Activated CD8-positive, alpha-beta T cell treated with anti-CD3 and anti-CD28 coated beads, Interleukin-2, amount 10 ng/mL, durations not matched to agents 7 days and 5 days (primary cell): ENCODE measurements at regions of chr11 and their contacts with region 1.

Region 1: GRCh38 chr11:62591448-62592145 is at the start of gene TUT1:
- DNase-seq: peak; percentile 99
- ATAC-seq: peak; percentile 88
- H3K4me3 Mint-ChIP-seq: peak within 1 kb of the TSS; percentile 91
- H3K27ac Mint-ChIP-seq: peak within 1 kb of the TSS; percentile 93
- H3K4me1 Mint-ChIP-seq: peaks cover 55% of the 10 kb centered on the region
- H3K27me3 Mint-ChIP-seq: no peaks in the 10 kb centered on the region
- total RNA-seq, gene TUT1: 22.2 to 25.0 TPM

Region 2: DNA sequence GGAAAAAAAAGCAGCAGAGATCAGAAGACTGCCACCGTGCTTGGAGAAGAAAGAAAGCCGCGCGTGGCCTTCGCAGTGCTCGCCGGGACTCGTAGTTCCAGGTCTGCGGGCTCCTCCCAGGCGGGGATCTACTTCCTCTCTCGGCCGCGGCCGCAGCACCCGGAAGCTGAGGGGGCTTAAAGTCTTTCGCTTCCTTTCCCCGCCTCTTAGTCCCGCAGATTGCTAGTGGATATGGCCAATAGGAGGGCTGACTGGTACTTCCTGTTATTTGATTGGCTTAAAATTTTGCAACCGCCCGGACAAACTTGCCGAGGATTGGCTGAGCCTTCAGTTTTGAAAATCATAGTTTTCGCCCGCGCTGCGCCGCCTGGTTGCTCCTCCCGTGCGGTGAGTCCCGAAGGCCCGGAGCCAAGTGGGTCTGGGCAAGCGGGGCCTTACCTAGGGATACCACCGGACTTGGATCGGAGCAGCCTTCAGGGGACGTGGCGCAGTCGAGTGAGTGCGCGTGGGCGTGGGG is 467.9 kb before region 1 on chr11 and contains the start of gene INCENP:
- CTCF ChIA-PET with region 1: no interaction called
- POLR2A ChIA-PET with region 1: no interaction called
- DNase-seq: peak; percentile 98
- ATAC-seq: peak; percentile 100
- H3K4me3 Mint-ChIP-seq: peak within 1 kb of the TSS; percentile 87
- H3K27ac Mint-ChIP-seq: peak within 1 kb of the TSS; percentile 93
- H3K4me1 Mint-ChIP-seq: peaks cover 32% of the 10 kb centered on the region
- H3K27me3 Mint-ChIP-seq: peaks cover 3% of the 10 kb centered on the region
- total RNA-seq, gene INCENP: 195 to 211 TPM

Region 3: GRCh38 chr11:62427630-62428233 is 163.9 kb before region 1 on chr11:
- CTCF ChIA-PET with region 1: interaction called, 30 read pairs
- POLR2A ChIA-PET with region 1: interaction called, 12 read pairs
- DNase-seq: peak; percentile 35
- ATAC-seq: peak; percentile 34
- H3K4me3 Mint-ChIP-seq: peak overlapping the region; percentile 2
- H3K27ac Mint-ChIP-seq: peak overlapping the region; percentile 84
- H3K4me1 Mint-ChIP-seq: peaks cover 79% of the 10 kb centered on the region
- H3K27me3 Mint-ChIP-seq: peaks cover 6% of the 10 kb centered on the region

Region 4: DNA sequence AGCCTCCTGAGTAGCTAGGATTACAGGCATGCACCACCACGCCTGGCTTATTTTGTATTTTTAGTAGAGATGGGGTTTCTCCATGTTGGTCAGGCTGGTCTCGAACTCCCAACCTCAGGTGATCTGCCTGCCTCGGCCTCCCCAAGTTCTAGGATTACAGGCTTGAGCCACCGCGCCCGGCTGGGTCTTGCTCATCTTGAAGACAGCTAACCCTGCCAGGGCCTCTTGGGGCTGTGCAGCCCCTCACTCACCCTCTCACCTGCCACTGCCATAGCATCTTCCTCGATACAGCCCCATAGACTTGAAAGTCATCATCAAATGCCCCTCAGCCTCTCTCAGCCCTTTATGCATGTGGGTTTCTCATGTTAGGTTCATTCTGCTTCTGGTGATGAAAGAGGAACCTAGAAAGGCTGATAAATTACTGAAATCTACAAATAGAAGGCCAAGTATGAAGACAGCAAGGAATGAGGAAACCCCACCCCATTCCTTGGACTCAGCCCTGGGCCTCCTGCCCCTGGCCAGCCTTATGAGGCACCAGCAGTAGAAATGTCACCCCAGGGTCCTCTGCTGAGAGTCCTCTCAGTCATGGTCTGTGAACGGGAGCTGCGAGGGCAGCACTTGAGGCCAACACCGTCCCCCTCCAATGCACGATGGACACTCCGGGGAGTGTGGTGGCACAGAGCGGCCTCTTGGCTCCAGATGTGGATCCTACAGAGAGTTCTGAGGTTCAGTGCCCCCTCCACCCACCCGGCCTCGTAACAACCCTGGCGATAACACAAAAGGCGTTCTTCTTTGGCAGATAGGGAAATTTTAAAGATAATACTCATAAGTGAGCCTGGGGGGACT is 148.0 kb before region 1 on chr11:
- CTCF ChIA-PET with region 1: no interaction called
- POLR2A ChIA-PET with region 1: no interaction called
- DNase-seq: no peak
- ATAC-seq: no peak
- H3K4me3 Mint-ChIP-seq: no peak overlapping the region
- H3K27ac Mint-ChIP-seq: no peak overlapping the region
- H3K4me1 Mint-ChIP-seq: peaks cover 3% of the 10 kb centered on the region
- H3K27me3 Mint-ChIP-seq: peaks cover 30% of the 10 kb centered on the region

Region 5: DNA sequence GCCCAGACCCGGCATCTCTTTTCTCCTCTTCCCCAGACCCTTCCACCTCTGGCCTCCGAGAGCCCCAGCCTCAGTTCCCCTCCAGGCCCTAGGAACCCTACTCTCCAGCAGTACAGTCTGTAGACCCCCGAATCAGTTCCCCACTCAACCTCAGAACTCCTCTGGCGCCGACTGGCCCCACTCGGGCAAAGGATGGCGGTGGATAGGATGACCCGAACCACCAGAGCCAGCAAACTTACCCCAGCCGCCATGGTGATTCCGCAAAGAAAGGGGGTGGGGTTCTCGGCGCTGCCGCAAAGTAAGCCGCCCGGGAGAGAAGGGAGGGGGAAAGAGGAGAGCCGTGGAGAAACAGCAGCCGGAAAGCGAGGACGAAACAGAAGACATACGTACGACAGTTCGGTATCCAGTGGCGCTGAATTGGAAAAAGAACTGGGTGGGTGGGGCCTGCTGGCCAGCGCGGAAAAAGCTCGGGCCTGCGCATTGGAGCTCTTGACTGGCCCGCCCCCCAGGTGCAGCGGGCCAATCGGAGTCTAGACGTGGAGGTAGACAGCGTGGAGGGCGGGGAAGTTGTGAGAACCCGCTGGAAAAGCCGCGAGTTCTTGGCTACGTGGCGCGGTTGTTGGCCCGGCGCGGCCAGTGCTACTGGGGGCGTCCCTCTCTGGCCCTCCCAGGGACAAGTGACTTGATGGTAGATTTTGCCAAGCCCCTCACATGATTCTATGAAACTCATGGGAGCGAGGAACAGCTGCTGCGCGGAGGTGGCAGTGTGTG is 17.8 kb before region 1 on chr11 and contains the start of gene EEF1G:
- CTCF ChIA-PET with region 1: interaction called, 36 read pairs
- POLR2A ChIA-PET with region 1: interaction called, 58 read pairs
- DNase-seq: peak; percentile 100
- ATAC-seq: peak; percentile 96
- H3K4me3 Mint-ChIP-seq: peak within 1 kb of the TSS; percentile 99
- H3K27ac Mint-ChIP-seq: peak within 1 kb of the TSS; percentile 97
- H3K4me1 Mint-ChIP-seq: peaks cover 53% of the 10 kb centered on the region
- H3K27me3 Mint-ChIP-seq: no peaks in the 10 kb centered on the region
- total RNA-seq, gene EEF1G: 1,058 to 1,098 TPM

Region 6: DNA sequence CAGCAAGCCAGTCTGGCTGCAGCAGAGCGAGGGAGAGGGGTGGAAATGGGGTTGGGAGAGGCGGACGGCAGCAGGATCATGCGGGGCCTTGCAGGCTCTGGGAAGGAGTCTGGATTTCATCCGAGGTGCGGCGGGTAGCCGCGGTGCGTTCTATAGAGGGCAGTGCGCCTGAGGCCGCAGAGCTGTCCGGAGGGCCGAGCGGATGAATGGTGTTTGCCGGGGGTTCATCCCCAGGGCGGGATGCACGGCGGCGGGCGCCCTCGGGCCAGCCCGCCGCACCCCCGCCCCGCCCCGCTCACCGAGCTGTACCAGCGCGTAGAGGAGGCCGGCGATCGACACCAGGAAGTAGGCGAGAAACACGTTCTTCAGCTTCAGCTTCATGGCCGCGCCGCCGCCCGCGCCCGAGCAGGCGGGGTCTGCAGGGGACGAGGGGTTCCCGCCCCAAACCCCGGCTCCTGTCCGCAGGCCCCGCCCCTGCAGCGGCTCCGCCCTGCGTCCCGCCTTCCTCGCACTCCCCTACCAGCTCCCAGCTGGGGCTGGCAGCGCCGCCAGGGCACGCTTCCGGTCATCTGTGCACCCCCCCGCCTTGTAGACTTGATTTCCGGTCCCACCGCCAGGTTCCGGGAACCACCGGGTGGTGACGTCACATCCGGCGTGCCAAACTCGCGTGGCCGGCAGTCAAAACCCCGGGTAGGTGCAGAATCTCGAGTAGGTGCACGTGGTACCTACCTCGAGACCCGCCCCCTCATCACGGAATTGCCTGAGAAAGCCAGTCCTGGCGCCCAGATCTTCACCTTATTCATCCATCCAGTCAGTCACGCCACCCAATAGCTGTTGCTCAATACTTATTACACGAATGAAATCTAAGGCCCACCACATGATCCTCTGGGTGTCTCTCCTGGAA is 30.2 kb after region 1 on chr11 and contains the start of gene B3GAT3:
- CTCF ChIA-PET with region 1: interaction called, 11 read pairs
- POLR2A ChIA-PET with region 1: interaction called, 25 read pairs
- DNase-seq: peak; percentile 98
- ATAC-seq: peak; percentile 90
- H3K4me3 Mint-ChIP-seq: peak within 1 kb of the TSS; percentile 86
- H3K27ac Mint-ChIP-seq: peak within 1 kb of the TSS; percentile 97
- H3K4me1 Mint-ChIP-seq: peaks cover 29% of the 10 kb centered on the region
- H3K27me3 Mint-ChIP-seq: no peaks in the 10 kb centered on the region
- total RNA-seq, gene B3GAT3: 63.0 to 64.8 TPM

Region 7: DNA sequence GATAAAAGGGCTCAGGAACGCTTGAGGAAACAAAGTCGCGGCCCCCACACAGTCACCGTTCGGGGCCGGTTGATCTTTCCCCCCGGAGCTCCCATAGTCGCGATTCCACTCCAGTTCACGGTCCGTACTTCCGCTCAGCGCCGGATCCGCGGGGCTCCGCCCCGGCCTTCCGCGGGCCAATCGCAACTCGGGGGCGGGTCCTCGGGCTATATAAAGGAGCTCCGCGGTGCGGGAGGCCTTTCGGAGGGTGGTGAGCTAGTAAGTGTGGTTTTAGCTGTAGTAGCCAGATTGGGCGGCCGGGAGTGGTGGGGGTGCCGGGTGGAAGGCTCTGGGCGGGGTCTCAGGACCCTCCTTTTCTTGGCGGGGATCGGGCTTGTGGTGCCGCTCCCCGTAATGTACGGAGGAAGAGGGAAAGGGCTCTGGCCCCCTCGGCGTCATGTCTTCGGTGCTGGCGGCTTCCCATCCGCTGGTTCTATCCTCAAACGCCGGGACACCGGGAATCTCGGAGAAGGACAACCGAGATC is 73.5 kb after region 1 on chr11 and contains the starts of genes C11orf98 and CSKMT:
- CTCF ChIA-PET with region 1: interaction called, 23 read pairs
- POLR2A ChIA-PET with region 1: interaction called, 40 read pairs
- DNase-seq: peak; percentile 97
- ATAC-seq: peak; percentile 93
- H3K4me3 Mint-ChIP-seq: peak within 1 kb of the TSS; percentile 98
- H3K27ac Mint-ChIP-seq: peak within 1 kb of the TSS; percentile 93
- H3K4me1 Mint-ChIP-seq: peaks cover 38% of the 10 kb centered on the region
- H3K27me3 Mint-ChIP-seq: no peaks in the 10 kb centered on the region
- total RNA-seq, gene C11orf98: 131 to 133 TPM
- total RNA-seq, gene CSKMT: 21.9 to 22.8 TPM

Region 8: GRCh38 chr11:62694455-62695167 is 103.0 kb after region 1 on chr11:
- CTCF ChIA-PET with region 1: interaction called, 34 read pairs
- POLR2A ChIA-PET with region 1: interaction called, 4 read pairs
- DNase-seq: peak; percentile 86
- ATAC-seq: peak; percentile 92
- H3K4me3 Mint-ChIP-seq: no peak overlapping the region
- H3K27ac Mint-ChIP-seq: peak overlapping the region; percentile 36
- H3K4me1 Mint-ChIP-seq: peaks cover 9% of the 10 kb centered on the region
- H3K27me3 Mint-ChIP-seq: no peaks in the 10 kb centered on the region

Region 9: DNA sequence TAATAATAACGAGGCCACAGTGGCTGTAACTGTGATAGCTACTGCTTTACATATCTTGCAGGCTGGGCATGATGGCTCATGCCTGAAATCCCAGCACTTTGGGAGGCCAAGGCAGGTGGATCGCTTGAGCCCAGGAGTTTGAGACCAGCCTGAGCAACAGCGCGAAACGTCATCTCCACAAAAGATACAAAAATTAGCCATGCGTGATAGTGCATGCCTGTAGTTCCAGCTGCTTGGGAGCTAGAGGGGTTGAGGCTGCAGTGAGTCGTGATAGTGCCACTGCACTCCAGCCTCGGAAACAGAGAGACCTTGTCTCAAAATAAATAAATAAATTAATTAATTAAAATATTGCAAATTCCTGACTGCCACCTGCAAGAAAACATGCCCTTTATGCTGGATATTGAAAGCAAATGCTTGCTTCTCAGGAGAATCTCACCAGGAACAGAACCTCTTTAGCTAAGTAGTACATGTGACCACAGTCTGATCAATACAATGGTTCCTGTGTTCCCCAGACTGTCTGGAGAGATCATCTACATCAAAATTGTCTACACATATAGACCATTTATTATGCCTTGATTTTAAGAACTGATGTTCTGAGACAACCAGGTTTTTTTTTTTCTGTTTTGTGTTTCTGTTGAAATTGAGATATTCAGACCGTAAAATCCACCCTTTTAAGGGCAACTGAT is 156.0 kb after region 1 on chr11:
- CTCF ChIA-PET with region 1: no interaction called
- POLR2A ChIA-PET with region 1: no interaction called
- DNase-seq: no peak
- ATAC-seq: no peak
- H3K4me3 Mint-ChIP-seq: no peak overlapping the region
- H3K27ac Mint-ChIP-seq: no peak overlapping the region
- H3K4me1 Mint-ChIP-seq: peaks cover 24% of the 10 kb centered on the region
- H3K27me3 Mint-ChIP-seq: no peaks in the 10 kb centered on the region

Region 10: DNA sequence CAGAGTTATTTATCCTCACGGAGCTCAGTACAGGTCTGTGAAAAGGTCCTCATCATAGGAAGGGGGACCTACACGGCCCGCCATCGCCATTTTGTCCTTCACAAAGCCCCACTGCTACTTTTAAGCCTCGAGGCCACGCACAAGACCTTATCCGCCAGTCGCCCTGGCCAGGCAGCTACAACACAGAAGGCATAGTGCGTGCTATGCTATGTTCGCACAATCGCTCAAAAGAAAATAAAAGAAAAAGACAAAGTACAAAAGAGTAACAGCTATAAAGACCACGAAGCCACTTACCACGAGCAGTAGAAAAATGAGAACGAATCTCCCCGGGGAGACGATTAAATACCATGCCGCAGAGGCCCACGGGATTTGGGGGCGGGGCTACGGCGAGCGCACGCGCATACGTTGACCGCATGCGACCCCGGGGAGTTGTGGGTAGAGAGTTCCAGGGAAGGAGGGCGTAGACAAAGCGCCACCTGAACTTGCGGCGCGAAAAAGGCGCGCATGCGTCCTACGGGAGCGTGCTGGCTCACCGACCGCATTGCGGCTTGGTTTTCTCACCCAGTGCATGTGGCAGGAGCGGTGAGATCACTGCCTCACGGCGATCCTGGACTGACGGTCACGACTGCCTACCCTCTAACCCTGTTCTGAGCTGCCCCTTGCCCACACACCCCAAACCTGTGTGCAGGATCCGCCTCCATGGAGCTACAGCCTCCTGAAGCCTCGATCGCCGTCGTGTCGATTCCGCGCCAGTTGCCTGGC is 264.2 kb after region 1 on chr11:
- CTCF ChIA-PET with region 1: interaction called, 7 read pairs
- POLR2A ChIA-PET with region 1: interaction called, 23 read pairs
- DNase-seq: peak; percentile 99
- ATAC-seq: peak; percentile 85
- H3K4me3 Mint-ChIP-seq: peak overlapping the region; percentile 99
- H3K27ac Mint-ChIP-seq: peak overlapping the region; percentile 98
- H3K4me1 Mint-ChIP-seq: peaks cover 69% of the 10 kb centered on the region
- H3K27me3 Mint-ChIP-seq: no peaks in the 10 kb centered on the region